Activated T-helper 1 cell treated with anti-CD3 and anti-CD28 coated beads, Interleukin-12 subunit alpha, Interleukin-12 subunit beta, Interleukin-2, Interleukin-4 antibody, amounts not matched to agents 30 ng/mL and 10 ng/mL and 1 ng/mL, durations not matched to agents 14 hours and 24 hours and 36 hours (primary cell): ENCODE measurements at regions of chr6 and their contacts with region 1.

Region 1: GRCh38 chr6:26270903-26271667 is 93.9 kb upstream of the BTN3A2 start:
- DNase-seq: peak; percentile 80
- H3K4me3 Mint-ChIP-seq: no peak overlapping the region
- H3K27ac Mint-ChIP-seq: no peak overlapping the region
- H3K4me1 Mint-ChIP-seq: peaks cover 45% of the 10 kb centered on the region
- H3K27me3 Mint-ChIP-seq: no peaks in the 10 kb centered on the region

Region 2: GRCh38 chr6:26025894-26026832 is 244.9 kb before region 1 on chr6:
- intact Hi-C with region 1: loop called (anchors 5 kb)
- DNase-seq: peak; percentile 88
- H3K4me3 Mint-ChIP-seq: peak overlapping the region; percentile 85
- H3K27ac Mint-ChIP-seq: peak overlapping the region; percentile 96
- H3K4me1 Mint-ChIP-seq: peaks cover 93% of the 10 kb centered on the region
- H3K27me3 Mint-ChIP-seq: no peaks in the 10 kb centered on the region

Region 3: DNA sequence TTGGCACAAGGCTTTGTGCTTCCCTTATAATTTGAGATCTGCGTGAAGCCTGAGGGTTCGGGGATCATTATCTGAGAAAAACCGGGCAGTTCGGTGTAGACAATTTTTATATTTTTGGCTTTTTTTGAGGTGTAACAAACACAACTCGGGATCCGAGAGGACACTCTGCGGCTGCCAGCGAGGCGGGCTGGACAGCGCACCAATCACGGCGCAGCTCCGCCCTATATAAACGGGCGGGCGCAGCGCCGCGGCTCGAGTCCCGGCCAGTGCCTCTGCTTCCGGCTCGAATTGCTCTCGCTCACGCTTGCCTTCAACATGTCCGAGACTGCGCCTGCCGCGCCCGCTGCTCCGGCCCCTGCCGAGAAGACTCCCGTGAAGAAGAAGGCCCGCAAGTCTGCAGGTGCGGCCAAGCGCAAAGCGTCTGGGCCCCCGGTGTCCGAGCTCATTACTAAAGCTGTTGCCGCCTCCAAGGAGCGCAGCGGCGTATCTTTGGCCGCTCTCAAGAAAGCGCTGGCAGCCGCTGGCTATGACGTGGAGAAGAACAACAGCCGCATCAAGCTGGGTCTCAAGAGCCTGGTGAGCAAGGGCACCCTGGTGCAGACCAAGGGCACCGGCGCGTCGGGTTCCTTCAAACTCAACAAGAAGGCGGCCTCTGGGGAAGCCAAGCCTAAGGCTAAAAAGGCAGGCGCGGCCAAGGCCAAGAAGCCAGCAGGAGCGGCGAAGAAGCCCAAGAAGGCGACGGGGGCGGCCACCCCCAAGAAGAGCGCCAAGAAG is 114.8 kb before region 1 on chr6:
- intact Hi-C with region 1: loop called (anchors 1 kb)
- DNase-seq: peak; percentile 89
- H3K4me3 Mint-ChIP-seq: peak overlapping the region; percentile 91
- H3K27ac Mint-ChIP-seq: peak overlapping the region; percentile 95
- H3K4me1 Mint-ChIP-seq: peaks cover 56% of the 10 kb centered on the region
- H3K27me3 Mint-ChIP-seq: peaks cover 3% of the 10 kb centered on the region

Region 4: DNA sequence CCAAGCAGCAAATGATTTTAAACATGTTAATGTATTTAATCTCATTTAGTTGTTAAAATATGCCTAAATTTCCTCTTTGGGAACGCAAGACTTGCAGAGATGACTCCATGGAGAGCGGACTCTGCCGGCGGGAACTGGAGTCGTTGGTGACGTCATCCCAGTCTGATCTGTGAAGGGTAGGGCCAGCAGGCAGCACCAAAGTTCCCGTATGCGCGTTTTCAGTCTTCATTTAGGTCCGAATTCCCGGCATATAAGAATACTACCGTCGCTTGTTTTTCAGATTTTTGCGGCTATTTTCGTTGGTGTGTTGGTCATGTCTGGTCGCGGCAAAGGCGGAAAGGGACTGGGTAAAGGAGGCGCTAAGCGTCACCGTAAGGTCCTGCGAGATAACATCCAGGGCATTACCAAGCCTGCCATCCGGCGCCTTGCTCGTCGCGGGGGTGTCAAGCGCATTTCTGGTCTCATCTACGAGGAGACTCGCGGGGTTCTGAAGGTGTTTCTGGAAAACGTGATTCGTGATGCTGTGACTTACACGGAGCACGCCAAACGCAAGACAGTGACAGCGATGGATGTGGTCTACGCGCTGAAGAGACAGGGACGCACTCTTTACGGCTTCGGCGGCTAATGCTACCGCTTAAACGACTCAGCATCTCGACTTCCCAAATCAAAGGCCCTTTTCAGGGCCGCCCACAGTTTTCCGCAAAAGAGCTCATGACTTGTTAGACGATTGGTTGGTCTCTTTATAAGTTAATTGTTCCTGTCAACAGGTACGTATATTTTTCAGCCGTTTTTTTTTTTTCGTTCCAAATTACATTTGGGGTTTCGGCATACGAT is 66.5 kb before region 1 on chr6:
- intact Hi-C with region 1: loop called (anchors 1 kb)
- DNase-seq: peak; percentile 82
- H3K4me3 Mint-ChIP-seq: no peak overlapping the region
- H3K27ac Mint-ChIP-seq: no peak overlapping the region
- H3K4me1 Mint-ChIP-seq: peaks cover 33% of the 10 kb centered on the region
- H3K27me3 Mint-ChIP-seq: peaks cover 2% of the 10 kb centered on the region

Region 5: DNA sequence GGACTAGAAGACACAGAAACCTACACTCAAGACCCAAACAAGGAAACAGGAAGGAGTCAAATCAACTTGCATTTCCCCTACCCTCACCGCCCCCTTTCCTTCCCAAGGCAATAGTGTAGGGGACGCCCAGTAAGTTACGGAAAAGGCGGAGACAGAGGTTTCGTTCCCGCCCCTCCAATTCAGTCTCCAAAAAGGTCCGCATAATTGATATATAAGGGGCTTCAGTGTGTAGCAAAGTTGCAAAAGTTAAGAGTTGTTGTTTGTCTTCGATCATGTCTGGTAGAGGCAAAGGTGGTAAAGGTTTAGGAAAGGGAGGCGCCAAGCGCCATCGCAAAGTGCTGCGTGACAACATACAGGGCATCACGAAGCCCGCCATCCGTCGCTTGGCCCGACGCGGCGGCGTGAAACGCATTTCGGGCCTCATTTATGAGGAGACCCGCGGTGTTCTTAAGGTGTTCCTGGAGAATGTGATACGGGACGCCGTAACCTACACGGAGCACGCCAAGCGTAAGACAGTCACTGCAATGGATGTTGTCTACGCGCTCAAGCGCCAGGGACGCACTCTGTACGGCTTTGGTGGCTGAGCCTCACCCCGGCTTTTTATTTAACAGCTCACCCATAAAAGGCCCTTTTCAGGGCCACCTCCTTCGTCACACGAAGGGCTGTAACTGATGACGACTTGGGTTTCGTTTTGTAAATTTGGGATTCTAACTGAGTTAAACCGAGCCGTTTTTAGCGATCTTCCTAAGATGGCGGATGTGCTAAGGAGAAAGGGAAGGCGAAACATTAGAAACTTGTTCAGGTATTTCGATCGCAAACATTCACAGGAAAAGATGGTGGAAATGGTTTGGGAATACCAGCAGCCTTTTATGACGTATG is 30.7 kb before region 1 on chr6:
- intact Hi-C with region 1: loop called (anchors 1 kb)
- DNase-seq: peak; percentile 78
- H3K4me3 Mint-ChIP-seq: peak overlapping the region; percentile 78
- H3K27ac Mint-ChIP-seq: peak overlapping the region; percentile 93
- H3K4me1 Mint-ChIP-seq: peaks cover 43% of the 10 kb centered on the region
- H3K27me3 Mint-ChIP-seq: no peaks in the 10 kb centered on the region

Region 6: GRCh38 chr6:26322645-26323482 is 51.8 kb after region 1 on chr6:
- intact Hi-C with region 1: loop called (anchors 1 kb)
- DNase-seq: peak; percentile 63
- H3K4me3 Mint-ChIP-seq: peak overlapping the region; percentile 89
- H3K27ac Mint-ChIP-seq: peak overlapping the region; percentile 51
- H3K4me1 Mint-ChIP-seq: peaks cover 51% of the 10 kb centered on the region
- H3K27me3 Mint-ChIP-seq: peaks cover 14% of the 10 kb centered on the region

Region 7: GRCh38 chr6:26336355-26337198 is 65.5 kb after region 1 on chr6:
- intact Hi-C with region 1: no loop called
- DNase-seq: no peak
- H3K4me3 Mint-ChIP-seq: peak overlapping the region; percentile 0
- H3K27ac Mint-ChIP-seq: peak overlapping the region; percentile 47
- H3K4me1 Mint-ChIP-seq: peaks cover 50% of the 10 kb centered on the region
- H3K27me3 Mint-ChIP-seq: peaks cover 6% of the 10 kb centered on the region

Region 8: DNA sequence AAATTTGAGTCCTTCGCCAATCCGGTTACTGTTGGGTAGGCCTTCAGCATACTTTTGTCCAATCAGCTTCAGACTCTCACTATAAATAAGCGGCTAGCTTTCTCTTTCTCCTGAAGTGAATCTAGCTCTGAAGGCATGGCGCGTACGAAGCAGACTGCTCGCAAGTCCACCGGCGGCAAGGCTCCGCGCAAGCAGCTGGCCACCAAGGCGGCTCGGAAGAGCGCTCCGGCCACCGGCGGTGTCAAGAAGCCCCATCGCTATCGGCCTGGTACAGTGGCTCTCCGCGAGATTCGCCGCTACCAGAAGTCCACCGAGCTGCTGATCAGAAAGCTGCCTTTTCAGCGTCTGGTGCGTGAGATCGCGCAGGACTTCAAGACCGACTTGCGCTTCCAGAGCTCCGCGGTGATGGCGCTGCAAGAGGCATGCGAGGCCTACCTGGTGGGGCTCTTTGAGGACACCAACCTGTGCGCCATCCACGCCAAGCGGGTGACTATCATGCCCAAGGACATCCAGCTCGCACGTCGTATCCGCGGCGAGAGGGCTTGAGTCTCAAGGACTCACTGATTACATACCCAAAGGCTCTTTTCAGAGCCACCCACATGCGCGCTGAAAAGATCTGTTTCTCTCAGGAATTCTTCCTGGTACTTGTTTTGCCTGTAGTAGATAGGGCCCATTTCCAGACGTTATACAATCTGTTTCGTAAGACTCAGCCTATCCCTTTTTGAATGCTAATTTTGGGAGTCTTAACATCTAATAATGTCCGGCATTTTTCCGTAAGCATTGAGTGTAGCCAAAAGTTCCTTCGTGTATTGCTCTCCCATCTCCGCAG is 1539.1 kb after region 1 on chr6:
- intact Hi-C with region 1: loop called (anchors 5 kb)
- DNase-seq: peak; percentile 83
- H3K4me3 Mint-ChIP-seq: peak overlapping the region; percentile 91
- H3K27ac Mint-ChIP-seq: peak overlapping the region; percentile 96
- H3K4me1 Mint-ChIP-seq: peaks cover 78% of the 10 kb centered on the region
- H3K27me3 Mint-ChIP-seq: no peaks in the 10 kb centered on the region